ENCODE measurements at regions of chr11 and their contacts with region 1.

Region 1: GRCh38 chr11:122334546-122335339 is 218.7 kb upstream of the BLID start:
- DNase-seq: no peak
- H3K4me3 ChIP-seq: no peak overlapping the region
- H3K27ac ChIP-seq: peak overlapping the region; percentile 53
- H3K27me3 ChIP-seq: no peaks in the 10 kb centered on the region
- CTCF ChIP-seq: no peak

Region 2: DNA sequence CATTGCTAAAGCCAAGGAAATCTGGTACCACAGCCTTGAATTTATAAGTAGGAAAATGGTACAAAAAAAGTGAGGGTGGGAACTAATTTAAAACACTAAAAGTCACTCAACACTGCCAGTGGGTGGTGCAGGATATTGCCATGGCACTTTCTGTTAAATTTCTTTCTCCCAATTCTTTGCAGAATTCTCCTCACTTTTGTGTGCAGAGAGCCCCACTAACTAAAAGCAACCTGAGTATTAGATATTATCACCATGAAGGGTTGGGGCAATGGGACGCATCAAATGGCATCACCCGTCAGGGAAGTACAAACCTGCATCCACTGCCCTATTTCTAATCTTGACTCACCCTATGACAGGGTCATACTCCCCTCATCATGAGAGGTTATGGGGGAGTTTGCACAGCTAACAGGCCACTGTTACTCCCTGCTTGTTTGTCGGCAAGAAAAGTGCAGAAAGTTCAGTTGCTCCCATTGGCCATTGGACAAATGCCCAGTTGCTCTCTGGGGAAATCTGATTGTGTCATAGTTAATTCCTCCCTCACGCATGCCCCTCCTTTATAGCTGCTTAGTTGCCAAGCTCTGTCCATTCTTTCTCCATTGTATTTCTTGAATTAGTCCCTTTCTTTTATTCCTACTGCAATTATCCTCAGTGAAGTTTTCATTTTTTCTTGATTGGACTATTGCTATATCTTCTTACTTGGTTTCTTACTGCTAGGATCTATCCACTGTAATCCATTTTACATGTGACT is 125.0 kb before region 1 on chr11:
- CTCF ChIA-PET with region 1: no interaction called
- POLR2A ChIA-PET with region 1: no interaction called
- DNase-seq: peak; percentile 59
- H3K4me3 ChIP-seq: no peak overlapping the region
- H3K27ac ChIP-seq: peak overlapping the region; percentile 63
- H3K27me3 ChIP-seq: no peaks in the 10 kb centered on the region
- CTCF ChIP-seq: no peak

Region 3: GRCh38 chr11:122317305-122317704 is 17.4 kb before region 1 on chr11:
- CTCF ChIA-PET with region 1: no interaction called
- POLR2A ChIA-PET with region 1: interaction called, 15 read pairs
- DNase-seq: peak; percentile 71
- H3K4me3 ChIP-seq: no peak overlapping the region
- H3K27ac ChIP-seq: peak overlapping the region; percentile 68
- H3K27me3 ChIP-seq: peaks cover 2% of the 10 kb centered on the region
- CTCF ChIP-seq: no peak

Measured in AG04450 (cell line).